PC-9 (cell line): ENCODE measurements at regions of chr7 and their contacts with region 1.

Region 1: DNA sequence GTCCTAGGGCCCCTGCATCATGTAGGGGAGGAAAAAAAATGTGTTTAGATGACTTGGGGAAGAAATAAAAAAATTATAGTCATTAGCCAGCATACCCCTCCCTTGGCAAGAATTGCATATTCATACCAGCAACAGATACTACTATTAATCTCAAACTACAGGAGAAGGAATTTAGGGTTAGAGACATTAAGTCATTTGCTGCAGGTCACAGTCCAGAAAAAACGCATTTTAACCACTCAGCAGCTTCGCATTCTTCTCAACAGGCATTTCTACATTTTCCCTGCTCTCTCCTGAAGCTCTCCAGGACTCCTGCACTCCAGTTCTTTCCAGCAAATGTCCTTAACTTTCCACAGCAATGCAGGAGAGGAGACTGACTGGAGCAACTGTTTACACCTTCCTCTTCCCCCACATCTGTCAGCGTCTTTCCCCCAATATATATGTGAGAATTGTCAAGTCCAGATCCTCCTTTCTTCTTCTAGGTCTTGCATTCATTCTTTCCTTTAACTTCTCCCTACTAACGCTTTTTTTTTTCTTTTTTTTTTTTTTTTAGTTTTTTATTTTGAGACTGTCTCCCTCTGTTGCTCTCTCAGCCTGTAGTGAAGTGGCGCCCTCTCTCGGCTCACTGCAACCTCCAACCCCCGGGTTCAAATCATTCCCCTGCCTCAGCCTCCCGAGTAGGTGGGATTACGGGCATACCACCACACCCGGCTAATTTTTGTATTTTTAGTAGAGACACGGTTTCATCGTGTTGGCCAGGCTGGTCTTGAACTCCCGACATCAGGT is 35.6 kb downstream of the PRPS1L1 start:
- DNase-seq: no peak
- H3K4me3 ChIP-seq: no peak overlapping the region
- H3K27ac ChIP-seq: no peak overlapping the region
- H3K4me1 ChIP-seq: no peaks in the 10 kb centered on the region
- H3K27me3 ChIP-seq: no peaks in the 10 kb centered on the region
- CTCF ChIP-seq: peak; percentile 46; the same call in 1 of the 2 replicates

Region 2: DNA sequence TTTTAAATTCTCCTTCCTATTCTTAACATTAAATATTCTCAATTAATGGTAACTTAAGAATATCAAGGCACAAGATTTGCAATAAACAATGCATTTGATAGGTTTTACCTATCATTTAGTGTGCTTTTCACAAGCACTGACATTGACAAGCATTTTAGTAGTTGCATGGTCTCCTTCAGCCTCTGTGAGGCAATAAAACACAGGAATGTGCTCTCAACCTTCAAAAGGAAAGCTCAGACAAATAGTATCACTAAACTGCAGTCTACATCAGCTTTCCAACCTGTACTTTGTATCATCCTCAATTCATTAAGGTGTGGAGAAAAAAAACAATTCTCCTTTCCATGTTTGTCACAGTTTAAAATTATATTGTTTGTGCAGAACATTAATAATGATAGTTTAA is 1289.6 kb before region 1 on chr7:
- CTCF ChIA-PET with region 1: no interaction called
- POLR2A ChIA-PET with region 1: interaction called, 11 read pairs
- intact Hi-C with region 1: no loop called
- DNase-seq: no peak
- H3K4me3 ChIP-seq: no peak overlapping the region
- H3K27ac ChIP-seq: no peak overlapping the region
- H3K4me1 ChIP-seq: no peaks in the 10 kb centered on the region
- H3K27me3 ChIP-seq: no peaks in the 10 kb centered on the region
- CTCF ChIP-seq: no peak

Region 3: DNA sequence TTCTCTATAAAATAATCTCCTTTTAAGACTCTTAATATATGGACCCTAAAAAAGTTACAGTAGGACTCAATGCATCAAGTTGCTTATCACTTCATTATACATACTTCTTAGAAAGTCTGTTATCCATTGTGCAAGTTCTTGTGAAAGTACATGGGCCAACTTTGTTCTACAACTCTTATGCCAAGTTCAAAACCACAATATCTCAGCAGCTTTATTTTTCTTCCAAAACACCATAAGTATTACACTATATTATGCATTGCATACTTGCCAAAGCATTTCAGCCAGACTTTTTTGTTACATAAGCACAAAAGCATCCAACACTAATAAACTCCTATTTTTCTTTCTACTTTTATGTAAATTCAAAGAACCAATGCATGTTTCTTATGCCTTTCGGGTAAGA is 599.2 kb before region 1 on chr7:
- CTCF ChIA-PET with region 1: no interaction called
- POLR2A ChIA-PET with region 1: no interaction called
- intact Hi-C with region 1: no loop called
- DNase-seq: no peak
- H3K4me3 ChIP-seq: no peak overlapping the region
- H3K27ac ChIP-seq: no peak overlapping the region
- H3K4me1 ChIP-seq: no peaks in the 10 kb centered on the region
- H3K27me3 ChIP-seq: no peaks in the 10 kb centered on the region
- CTCF ChIP-seq: no peak

Region 4: GRCh38 chr7:17680943-17681351 is 311.1 kb before region 1 on chr7:
- CTCF ChIA-PET with region 1: interaction called, 19 read pairs
- POLR2A ChIA-PET with region 1: no interaction called
- intact Hi-C with region 1: no loop called
- DNase-seq: peak in 1 of 2 experiments; percentile 60
- H3K4me3 ChIP-seq: no peak overlapping the region
- H3K27ac ChIP-seq: no peak overlapping the region
- H3K4me1 ChIP-seq: no peaks in the 10 kb centered on the region
- H3K27me3 ChIP-seq: no peaks in the 10 kb centered on the region
- CTCF ChIP-seq: peak; percentile 91

Region 5: DNA sequence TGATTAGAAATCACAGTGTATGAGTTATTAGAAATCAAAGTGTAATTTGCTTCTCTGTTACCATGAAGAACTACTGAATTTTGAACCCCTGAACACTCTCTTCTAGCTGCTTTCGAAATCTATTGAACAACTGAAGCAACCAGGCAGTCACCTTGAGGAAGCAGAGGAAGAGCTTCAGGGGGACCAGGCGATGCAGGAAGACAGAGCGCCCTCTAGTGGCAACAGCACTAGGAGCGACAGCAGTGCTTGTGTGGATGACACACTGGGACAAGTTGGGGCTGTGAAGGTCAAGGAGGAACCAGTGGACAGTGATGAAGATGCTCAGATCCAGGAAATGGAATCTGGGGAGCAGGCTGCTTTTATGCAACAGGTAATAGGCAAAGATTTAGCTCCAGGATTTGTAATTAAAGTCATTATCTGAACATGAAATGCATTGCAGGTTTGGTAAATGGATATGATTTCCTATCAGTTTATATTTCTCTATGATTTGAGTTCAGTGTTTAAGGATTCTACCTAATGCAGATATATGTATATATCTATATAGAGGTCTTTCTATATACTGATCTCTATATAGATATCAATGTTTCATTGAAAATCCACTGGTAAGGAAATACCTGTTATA is 674.2 kb after region 1 on chr7:
- CTCF ChIA-PET with region 1: interaction called, 14 read pairs
- POLR2A ChIA-PET with region 1: no interaction called
- intact Hi-C with region 1: no loop called
- DNase-seq: peak; percentile 57 to 73
- H3K4me3 ChIP-seq: no peak overlapping the region
- H3K27ac ChIP-seq: no peak overlapping the region
- H3K4me1 ChIP-seq: no peaks in the 10 kb centered on the region
- H3K27me3 ChIP-seq: no peaks in the 10 kb centered on the region
- CTCF ChIP-seq: peak; percentile 99